ENCODE measurements at regions of chr5 and their contacts with region 1.

Region 1: GRCh38 chr5:36264202-36264760 is 22.6 kb upstream of the NADK2 start:
- DNase-seq: no peak
- H3K4me3 ChIP-seq: no peak overlapping the region
- CTCF ChIP-seq: no peak

Region 2: DNA sequence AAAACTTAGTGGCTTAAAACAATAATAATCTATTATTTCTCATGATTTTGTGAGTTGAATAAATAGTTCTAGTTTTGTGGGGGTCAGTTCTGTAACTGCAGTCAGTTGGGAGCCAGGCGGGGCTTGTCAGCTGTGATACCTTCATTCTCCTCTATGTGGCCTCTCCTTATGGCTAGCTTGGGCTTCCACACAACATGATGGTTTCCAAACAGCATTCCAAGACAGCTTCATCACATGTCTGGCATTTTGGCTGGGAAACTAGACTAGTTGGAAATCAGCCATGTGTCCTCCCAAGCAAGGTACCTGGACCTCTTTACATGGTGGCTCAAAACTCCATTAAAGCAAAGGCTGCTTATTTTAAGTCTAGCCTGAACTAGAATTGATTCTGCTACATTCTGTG is 98.8 kb after region 1 on chr5:
- in situ Hi-C with region 1: loop called (anchors 10 kb)
- DNase-seq: peak; percentile 72
- H3K4me3 ChIP-seq: no peak overlapping the region
- CTCF ChIP-seq: peak; percentile 42

Region 3: DNA sequence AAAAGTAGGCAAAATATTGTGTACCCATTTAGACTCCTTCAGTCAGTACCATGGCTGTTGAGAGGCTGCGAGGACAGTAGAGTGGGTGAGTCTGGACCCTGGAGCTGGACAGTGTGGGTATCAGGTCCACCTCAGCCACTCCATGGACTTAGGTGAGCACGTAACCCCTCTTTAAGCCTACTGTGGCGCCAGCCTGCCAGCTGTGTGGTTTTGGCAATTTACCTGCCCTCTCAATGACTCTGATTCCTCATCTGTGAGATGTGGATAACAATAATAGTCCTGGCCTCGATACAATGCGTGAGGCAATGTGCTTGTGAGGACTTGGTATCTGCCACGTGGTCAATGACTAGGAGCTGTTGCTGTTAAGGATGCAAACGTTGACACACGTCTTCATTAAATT is 360.0 kb after region 1 on chr5:
- in situ Hi-C with region 1: no loop called
- DNase-seq: no peak
- H3K4me3 ChIP-seq: no peak overlapping the region
- CTCF ChIP-seq: no peak